HEK293 (cell line): ENCODE measurements at regions of chr12 and their contacts with region 1.

Region 1: GRCh38 chr12:49358483-49359141 is 8.7 kb upstream of the SPATS2 start:
- H3K4me3 ChIP-seq: no peak overlapping the region
- H3K27ac ChIP-seq: no peak overlapping the region
- H3K4me1 ChIP-seq: no peaks in the 10 kb centered on the region
- CTCF ChIP-seq: peak; percentile 78

Region 2: DNA sequence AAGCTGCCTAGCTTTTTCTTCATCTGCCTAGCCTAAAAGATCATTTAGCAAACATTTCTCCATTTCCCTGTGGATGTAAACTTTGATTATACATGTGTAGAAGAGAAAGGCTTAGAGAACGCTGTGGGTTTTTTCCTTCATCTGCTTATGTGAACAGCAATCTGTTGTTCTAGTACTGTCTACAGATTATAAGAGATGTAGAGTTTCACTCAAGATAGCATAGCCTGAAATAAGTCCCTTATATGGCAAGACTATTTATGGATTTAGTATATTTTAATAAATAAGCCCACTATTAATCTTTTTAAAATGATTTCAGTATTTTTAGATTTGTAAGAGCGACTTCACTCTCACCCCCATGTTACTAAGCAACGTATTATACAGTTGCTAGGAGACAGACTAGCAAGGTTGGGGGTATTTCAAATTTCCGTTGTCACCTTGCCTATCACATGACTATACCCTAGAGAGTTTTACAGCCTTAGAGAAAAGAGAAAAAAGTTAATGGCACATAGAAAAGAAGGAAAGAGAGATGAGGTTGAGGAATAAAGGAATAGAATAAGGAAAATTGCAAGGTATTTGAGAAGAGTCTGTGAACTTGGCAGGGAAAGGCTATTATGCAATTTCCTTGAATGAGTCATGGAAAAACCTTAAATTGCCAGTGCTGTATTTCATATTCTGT is 157.6 kb before region 1 on chr12:
- CTCF ChIA-PET with region 1: no interaction called
- POLR2A ChIA-PET with region 1: no interaction called
- H3K4me3 ChIP-seq: no peak overlapping the region
- H3K27ac ChIP-seq: no peak overlapping the region
- H3K4me1 ChIP-seq: peaks cover 17% of the 10 kb centered on the region
- CTCF ChIP-seq: no peak

Region 3: GRCh38 chr12:49279706-49280159 is 78.9 kb before region 1 on chr12:
- CTCF ChIA-PET with region 1: interaction called, 112 read pairs
- POLR2A ChIA-PET with region 1: no interaction called
- H3K4me3 ChIP-seq: no peak overlapping the region
- H3K27ac ChIP-seq: peak overlapping the region; percentile 65
- H3K4me1 ChIP-seq: peaks cover 4% of the 10 kb centered on the region; the same call in 1 of the 2 replicates
- CTCF ChIP-seq: no peak

Region 4: DNA sequence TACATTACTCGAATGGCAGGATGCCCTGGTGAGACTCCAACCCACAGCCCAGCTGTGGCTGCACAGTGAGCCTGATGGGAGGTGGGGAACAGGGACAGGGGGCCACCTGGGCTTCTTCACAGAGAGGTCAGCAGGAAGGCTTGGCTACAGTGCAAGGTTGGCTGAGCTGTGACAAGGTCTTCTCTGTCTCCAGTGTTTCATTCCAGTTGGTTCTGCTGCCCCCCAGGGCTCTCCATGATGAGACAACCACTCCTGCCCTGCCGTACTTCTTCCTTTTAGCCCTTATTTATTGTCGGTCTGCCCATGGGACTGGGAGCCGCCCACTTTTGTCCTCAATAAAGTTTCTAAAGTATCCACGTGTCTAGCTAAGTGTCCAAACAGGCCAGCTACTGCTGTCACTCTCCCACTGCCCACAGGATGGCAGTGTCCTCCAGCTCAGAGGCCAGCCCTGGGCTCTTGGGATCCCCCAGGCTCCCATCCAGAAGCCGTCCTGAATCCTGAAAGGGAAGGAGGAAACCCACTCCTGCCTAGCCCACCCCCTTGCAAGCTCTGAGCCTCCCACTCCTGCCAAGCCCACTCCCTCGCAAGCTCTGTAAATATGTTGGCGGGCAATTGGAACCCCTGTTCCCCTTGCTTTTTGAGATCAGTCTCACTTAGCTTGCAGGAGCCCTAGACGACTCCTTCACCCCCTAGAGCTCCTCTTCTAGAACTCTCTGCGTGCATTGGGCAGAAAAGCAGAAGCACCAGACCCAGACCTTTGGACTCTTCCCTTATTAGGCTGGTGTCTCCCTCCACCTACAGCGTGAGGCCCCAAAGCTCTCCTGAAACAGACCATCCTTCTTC is 27.0 kb before region 1 on chr12:
- CTCF ChIA-PET with region 1: interaction called, 99 read pairs
- POLR2A ChIA-PET with region 1: interaction called, 7 read pairs
- H3K4me3 ChIP-seq: no peak overlapping the region
- H3K27ac ChIP-seq: no peak overlapping the region
- H3K4me1 ChIP-seq: peaks cover 5% of the 10 kb centered on the region; the same call in 1 of the 2 replicates
- CTCF ChIP-seq: peak; percentile 88

Region 5: DNA sequence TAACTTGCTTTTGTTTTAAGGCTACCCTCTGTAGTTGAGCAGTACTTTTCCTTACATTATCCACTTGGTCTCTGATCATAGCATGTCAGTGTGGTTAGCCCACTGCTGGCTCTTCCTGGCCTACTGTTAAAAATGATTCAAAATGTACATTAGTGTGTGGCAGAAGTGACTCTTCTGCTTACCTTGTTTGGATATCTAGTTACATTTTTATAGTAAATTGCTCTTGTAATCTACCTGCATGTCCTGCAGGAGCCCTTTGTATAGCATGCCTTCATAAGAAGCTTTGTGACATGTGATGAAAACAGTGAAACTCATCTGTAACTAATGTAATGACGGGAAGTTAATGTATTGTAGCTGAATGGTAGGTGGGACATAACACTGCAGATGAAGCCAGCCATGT is 16.8 kb after region 1 on chr12:
- CTCF ChIA-PET with region 1: interaction called, 41 read pairs
- POLR2A ChIA-PET with region 1: no interaction called
- H3K4me3 ChIP-seq: no peak overlapping the region
- H3K27ac ChIP-seq: peak overlapping the region; percentile 1; the same call in 1 of the 2 replicates
- H3K4me1 ChIP-seq: peaks cover 4% of the 10 kb centered on the region
- CTCF ChIP-seq: no peak

Region 6: DNA sequence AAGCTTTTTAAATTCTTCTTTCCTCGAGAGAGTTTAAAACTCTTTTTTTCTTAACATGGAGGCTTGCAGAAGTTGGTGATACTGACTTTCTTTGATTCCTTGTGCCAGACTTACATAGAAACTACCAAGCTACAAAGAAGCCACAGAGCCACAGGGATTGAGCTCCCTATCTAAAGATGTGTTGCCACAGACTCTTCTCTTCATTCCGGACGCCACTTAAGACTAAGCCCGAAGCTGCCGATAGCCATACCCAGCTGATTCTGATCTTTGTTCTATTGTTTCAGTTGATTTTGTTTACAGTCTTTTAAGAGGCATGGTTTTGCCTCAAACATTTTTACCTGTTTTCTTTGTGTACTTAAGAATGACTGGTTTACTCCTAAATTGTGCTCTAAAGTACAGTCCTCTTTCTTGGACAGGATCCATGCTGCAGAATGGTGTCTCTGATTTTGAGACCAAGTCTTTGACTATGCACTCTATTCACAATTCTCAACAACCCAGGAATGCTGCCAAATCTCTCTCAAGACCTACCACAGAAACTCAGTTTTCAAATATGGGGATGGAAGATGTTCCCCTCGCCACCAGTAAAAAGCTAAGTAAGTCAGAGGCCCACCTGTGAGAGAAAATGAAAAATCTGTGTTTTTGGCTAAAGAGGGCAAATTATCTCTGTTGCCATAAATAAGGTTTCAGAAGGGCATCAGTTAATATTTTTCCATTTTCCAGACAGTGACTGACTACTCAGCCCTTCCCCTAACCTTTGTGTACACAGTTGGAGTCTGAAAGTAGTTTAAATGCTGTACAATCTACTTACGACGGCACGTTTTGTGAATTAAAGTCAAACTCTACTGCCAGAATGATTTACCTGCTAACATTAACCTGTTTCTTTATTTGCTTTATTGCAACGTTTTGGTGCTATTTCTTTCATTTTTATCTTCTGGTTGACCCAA is 138.1 kb after region 1 on chr12:
- CTCF ChIA-PET with region 1: interaction called, 22 read pairs
- POLR2A ChIA-PET with region 1: interaction called, 3 read pairs
- H3K4me3 ChIP-seq: no peak overlapping the region
- H3K27ac ChIP-seq: no peak overlapping the region
- H3K4me1 ChIP-seq: no peaks in the 10 kb centered on the region
- CTCF ChIP-seq: no peak

Region 7: GRCh38 chr12:49553512-49554088 is 195.0 kb after region 1 on chr12:
- CTCF ChIA-PET with region 1: interaction called, 56 read pairs
- POLR2A ChIA-PET with region 1: interaction called, 8 read pairs
- H3K4me3 ChIP-seq: no peak overlapping the region
- H3K27ac ChIP-seq: no peak overlapping the region
- H3K4me1 ChIP-seq: no peaks in the 10 kb centered on the region
- CTCF ChIP-seq: peak; percentile 86